ENCODE measurements at regions of chr6 and their contacts with region 1.

Region 1: DNA sequence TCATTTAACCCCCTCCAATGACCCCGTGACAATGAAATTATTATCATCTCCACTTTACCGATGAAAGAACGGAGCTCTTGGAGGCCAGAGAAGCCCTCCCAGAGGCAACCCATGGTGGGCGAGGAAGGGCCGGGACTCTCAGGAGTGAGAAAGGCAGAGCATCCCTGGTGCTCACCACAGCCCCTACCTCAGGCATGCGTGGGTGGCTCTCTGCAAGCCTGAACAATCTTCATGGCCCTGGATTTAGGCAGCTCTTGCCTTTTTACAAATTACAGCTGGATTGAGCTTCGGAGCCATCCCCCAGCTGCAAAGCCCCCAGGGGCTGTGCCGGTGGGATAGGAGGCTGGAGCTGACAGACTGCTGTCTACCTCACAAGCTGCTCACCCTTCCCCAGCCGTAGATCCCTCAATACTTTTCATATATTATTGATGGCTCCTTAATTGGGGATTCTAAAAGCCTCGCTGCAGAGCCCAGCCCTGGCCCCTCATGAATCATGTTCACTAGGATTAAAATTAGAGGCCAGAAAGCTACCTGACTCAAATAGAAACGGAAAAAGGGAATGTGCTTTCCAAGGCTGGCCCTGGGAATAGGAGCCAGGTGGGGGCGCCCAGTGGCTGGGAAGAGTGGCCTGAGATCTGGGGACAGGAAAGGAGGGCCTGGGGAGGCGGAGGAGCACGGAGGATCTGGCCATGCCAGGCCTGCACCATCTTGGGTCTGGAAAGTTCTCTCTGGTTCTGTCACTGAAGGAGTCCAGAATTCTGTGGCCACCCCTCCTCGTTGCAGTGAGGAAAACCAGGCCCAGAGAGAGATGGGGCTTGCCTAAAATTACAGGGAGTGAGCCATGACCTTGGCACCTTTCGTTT is 29.1 kb downstream of the CPNE5 start:
- DNase-seq: peak; percentile 55
- ATAC-seq: peak; percentile 72
- H3K4me3 Mint-ChIP-seq: no peak overlapping the region
- H3K27ac Mint-ChIP-seq: no peak overlapping the region
- H3K4me1 Mint-ChIP-seq: peaks cover 22% of the 10 kb centered on the region
- H3K27me3 Mint-ChIP-seq: peaks cover 5% of the 10 kb centered on the region; the same call in 1 of the 2 replicates
- CTCF ChIP-seq: no peak

Region 2: GRCh38 chr6:36793913-36794712 is 16.1 kb before region 1 on chr6:
- CTCF ChIA-PET with region 1: interaction called, 11 read pairs
- POLR2A ChIA-PET with region 1: no interaction called
- DNase-seq: no peak
- ATAC-seq: peak; percentile 69
- H3K4me3 Mint-ChIP-seq: peak overlapping the region; percentile 25; the same call in 1 of the 2 replicates
- H3K27ac Mint-ChIP-seq: peak overlapping the region; percentile 37; the same call in 1 of the 2 replicates
- H3K4me1 Mint-ChIP-seq: peaks cover 40% of the 10 kb centered on the region
- H3K27me3 Mint-ChIP-seq: no peaks in the 10 kb centered on the region
- CTCF ChIP-seq: no peak

Measured in WTC11 (cell line).